Left colon (tissue), 2 donors: ENCODE measurements at regions of chr12 and their contacts with region 1.

Region 1: DNA sequence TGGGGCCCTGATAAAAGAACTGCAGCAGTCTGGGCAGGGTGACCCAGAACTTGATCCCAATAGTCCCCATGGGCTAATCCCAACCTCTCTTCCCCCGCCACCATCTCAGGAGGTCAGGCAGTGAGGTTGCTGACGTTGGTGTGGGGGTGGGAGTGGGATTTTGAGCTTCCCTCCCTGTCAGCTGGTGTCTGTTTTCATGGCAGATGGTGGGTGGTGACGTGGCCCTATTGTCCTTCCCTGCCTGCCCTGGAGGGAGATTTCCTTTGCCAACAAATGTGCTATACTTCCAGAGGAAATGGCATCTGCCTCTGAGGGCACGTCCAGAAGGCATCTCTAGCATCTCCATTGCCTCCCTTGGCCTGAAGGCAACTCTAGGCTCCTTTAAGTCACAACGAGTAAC is 37.7 kb downstream of the NEUROD4 start:
- DNase-seq: no peak
- ATAC-seq: no peak

Region 2: GRCh38 chr12:54740882-54741281 is 316.6 kb before region 1 on chr12:
- intact Hi-C with region 1: no loop called
- DNase-seq: no peak
- ATAC-seq: no peak

Region 3: DNA sequence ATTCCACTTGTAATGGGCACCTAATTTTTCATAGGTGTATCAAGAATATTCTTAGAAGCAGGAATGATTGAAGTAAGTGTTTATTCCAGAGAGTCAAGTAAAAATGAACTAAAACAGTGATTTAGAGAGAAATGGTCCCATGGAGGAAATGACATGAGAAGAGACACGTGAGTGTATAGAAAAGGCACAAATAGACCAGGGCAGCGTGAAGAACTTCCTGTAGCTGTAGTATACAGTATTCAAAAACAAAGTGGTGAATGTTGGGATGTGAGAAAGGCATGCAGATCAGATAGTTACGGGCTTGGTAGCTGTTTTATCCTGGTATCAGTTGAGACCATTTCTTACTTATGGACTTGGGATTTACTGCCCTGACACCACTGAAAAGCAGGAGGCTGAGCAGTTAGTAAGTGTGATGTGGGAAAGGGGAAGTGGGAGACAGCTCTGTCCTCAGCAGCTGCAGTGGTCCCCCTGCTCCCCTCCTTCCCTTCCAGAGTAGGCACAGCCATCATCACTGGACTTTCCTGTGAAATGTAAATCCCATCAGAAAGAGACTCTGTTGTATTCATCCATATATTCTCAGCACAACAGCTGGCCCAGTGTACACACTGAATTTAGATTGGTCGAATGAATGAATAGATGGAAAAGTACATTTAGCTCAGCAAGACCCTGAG is 56.1 kb before region 1 on chr12:
- intact Hi-C with region 1: loop called in 1 of 2 experiments (anchors 10 kb)
- DNase-seq: no peak
- ATAC-seq: no peak